Posterior vena cava (tissue), 2 donors: ENCODE measurements at regions of chr11 and their contacts with region 1.

Region 1: DNA sequence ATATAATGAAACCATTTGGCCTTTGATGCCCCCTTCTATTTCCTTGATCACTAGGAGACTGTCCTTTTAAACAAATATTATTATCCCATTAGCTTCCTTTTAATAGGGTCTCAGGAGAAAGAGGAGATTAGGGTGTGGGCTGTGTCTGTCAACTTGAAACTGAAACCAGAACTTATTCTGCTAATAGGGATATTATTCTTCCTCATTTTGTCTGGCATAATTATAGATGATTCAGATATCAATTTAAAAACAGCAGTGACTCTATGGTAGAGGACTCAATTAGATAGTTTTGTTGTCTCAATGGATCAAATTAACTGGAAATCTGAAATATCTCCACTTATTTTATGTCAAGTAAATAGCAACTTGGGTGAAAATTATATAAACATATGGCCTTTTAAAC is 584.9 kb upstream of the CCDC90B start:
- DNase-seq: no peak

Region 2: GRCh38 chr11:83858694-83859093 is 12.4 kb before region 1 on chr11:
- intact Hi-C with region 1: loop called in 1 of 2 experiments (anchors 2 kb)
- DNase-seq: no peak